ENCODE measurements at regions of chr4 and their contacts with region 1.

Region 1: DNA sequence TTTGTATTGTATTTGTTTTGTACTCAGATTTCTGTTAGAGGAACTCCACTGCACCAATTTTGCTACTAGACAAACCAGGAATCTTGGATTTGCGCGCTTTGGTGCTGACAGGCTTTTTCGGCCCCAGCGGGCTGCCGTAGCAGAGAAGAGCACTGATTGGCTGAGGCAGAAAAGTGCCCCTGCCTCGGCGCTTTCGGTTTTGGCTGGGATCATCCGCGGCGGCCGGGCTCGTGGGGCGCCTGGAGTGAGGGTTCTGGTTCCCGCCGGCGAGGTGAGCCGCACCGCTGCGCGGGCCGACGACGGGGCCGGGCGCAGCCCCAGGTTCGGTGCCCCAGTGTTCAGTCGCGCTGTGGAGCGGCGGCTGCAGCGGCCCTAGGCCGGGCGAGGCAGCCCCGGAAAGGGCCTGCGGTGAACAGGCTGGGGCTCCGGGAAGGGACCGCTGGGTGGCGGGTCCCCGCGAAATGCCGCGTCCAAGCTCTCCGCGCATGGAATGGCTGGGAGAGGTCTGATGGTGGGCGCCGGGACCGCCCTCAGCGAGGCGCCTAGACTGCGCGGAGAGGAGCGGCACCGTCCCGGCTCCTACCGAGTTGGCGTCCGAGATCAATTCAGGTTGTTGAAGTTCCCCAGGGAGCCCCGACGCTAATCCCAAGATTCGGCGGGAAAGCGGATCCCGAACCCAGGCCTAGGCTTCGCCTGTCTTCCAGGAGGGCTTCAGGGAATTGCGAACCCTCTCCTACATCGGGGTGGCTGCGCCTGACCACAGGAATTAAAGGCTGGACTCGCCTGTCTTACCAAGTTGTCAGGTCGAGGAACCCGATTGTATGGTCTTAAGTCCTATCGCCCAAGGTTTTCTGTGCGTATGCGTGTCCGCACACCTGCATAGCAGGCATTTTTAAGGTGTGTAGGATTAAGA is at the start of gene LSM6:
- DNase-seq: peak; percentile 66 to 92 (median 76)
- ATAC-seq: peak; percentile 90
- H3K4me3 ChIP-seq: peak within 1 kb of the TSS; percentile 94
- H3K4me3 Mint-ChIP-seq: peak within 1 kb of the TSS; percentile 92
- H3K27ac ChIP-seq: peak within 1 kb of the TSS; percentile 54 to 71
- H3K27ac Mint-ChIP-seq: peak within 1 kb of the TSS; percentile 99
- H3K4me1 ChIP-seq: peaks cover 21% of the 10 kb centered on the region
- H3K4me1 Mint-ChIP-seq: peaks cover 62% of the 10 kb centered on the region
- H3K27me3 ChIP-seq: no peaks in the 10 kb centered on the region
- H3K27me3 Mint-ChIP-seq: no peaks in the 10 kb centered on the region
- CTCF ChIP-seq: no peak
- total RNA-seq, gene LSM6: 33.8 to 34.2 TPM

Region 2: GRCh38 chr4:145097821-145098674 is 1077.7 kb before region 1 on chr4 and contains the starts of genes ABCE1 and ANAPC10:
- CTCF ChIA-PET with region 1: no interaction called
- POLR2A ChIA-PET with region 1: no interaction called
- intact Hi-C with region 1: loop called in 1 of 2 experiments (anchors 10 kb)
- DNase-seq: peak; percentile 88 to 100 (median 93)
- ATAC-seq: peak; percentile 89
- H3K4me3 ChIP-seq: peak within 1 kb of the TSS; percentile 93
- H3K4me3 Mint-ChIP-seq: peak within 1 kb of the TSS; percentile 95
- H3K27ac ChIP-seq: peak within 1 kb of the TSS; percentile 76 to 90
- H3K27ac Mint-ChIP-seq: peak within 1 kb of the TSS; percentile 99
- H3K4me1 ChIP-seq: peaks cover 23% of the 10 kb centered on the region
- H3K4me1 Mint-ChIP-seq: peaks cover 48% of the 10 kb centered on the region
- H3K27me3 ChIP-seq: no peaks in the 10 kb centered on the region
- H3K27me3 Mint-ChIP-seq: no peaks in the 10 kb centered on the region
- CTCF ChIP-seq: no peak
- total RNA-seq, gene ABCE1: 50.1 to 50.6 TPM
- total RNA-seq, gene ANAPC10: 25.8 to 27.5 TPM

Region 3: GRCh38 chr4:145936142-145936996 is 239.4 kb before region 1 on chr4:
- CTCF ChIA-PET with region 1: no interaction called
- POLR2A ChIA-PET with region 1: interaction called, 6 read pairs
- intact Hi-C with region 1: loop called (anchors 5 to 10 kb)
- DNase-seq: peak; percentile 44 to 87 (median 64)
- ATAC-seq: peak; percentile 51
- H3K4me3 ChIP-seq: peak overlapping the region; percentile 88
- H3K4me3 Mint-ChIP-seq: peak overlapping the region; percentile 98
- H3K27ac ChIP-seq: peak overlapping the region; percentile 13 to 62
- H3K27ac Mint-ChIP-seq: peak overlapping the region; percentile 90
- H3K4me1 ChIP-seq: peaks cover 16% of the 10 kb centered on the region
- H3K4me1 Mint-ChIP-seq: peaks cover 51% of the 10 kb centered on the region
- H3K27me3 ChIP-seq: no peaks in the 10 kb centered on the region
- H3K27me3 Mint-ChIP-seq: peaks cover 5% of the 10 kb centered on the region
- CTCF ChIP-seq: peak; percentile 46